ENCODE measurements at regions of chr7 and their contacts with region 1.

Region 1: DNA sequence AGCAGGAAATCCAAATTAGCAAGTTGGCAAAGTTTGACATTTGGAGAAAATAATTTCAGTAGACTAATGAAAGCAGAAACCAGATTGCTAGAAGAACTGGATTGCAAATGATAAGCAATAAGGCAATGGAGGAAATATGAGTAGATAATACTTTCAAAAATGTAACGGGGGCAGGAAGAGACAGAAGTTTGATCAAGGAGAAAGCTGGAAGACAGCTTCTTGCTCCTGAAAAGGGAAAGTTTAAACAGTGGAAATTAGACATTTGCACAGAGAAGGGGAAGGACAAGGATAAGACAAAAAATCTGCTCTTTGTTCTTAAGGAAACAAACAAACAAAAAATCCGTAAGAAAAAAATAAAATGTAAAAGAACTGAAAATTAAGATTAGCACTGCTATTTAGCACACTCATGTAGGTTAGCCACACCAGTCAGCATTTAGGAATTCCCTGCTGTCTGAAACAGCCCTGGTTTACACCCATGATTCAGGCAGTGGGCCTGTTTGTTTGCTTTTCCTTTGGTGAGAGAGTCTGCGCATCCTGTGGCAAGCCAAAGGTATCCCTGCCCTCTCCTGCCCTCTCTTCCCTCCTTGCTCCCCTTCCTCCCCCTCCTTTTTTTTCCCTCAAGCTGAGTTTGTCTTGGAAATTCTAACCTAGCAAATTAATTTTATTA is 104.3 kb upstream of the CAV2 start:
- DNase-seq: peak; percentile 85 to 90
- H3K4me3 ChIP-seq: peak overlapping the region; percentile 37; the same call in 1 of the 2 replicates
- H3K27ac ChIP-seq: peak overlapping the region; percentile 96
- H3K4me1 ChIP-seq: peaks cover 29% of the 10 kb centered on the region
- H3K27me3 ChIP-seq: no peaks in the 10 kb centered on the region
- CTCF ChIP-seq: no peak

Region 2: GRCh38 chr7:116122972-116123595 is 272.2 kb before region 1 on chr7:
- CTCF ChIA-PET with region 1: no interaction called
- POLR2A ChIA-PET with region 1: no interaction called
- intact Hi-C with region 1: no loop called
- DNase-seq: peak in 1 of 2 experiments; percentile 12
- H3K4me3 ChIP-seq: no peak overlapping the region
- H3K27ac ChIP-seq: no peak overlapping the region
- H3K4me1 ChIP-seq: no peaks in the 10 kb centered on the region
- H3K27me3 ChIP-seq: no peaks in the 10 kb centered on the region
- CTCF ChIP-seq: peak; percentile 77

Region 3: GRCh38 chr7:116249708-116250553 is 145.3 kb before region 1 on chr7:
- CTCF ChIA-PET with region 1: no interaction called
- POLR2A ChIA-PET with region 1: no interaction called
- intact Hi-C with region 1: no loop called
- DNase-seq: peak in 1 of 2 experiments; percentile 36
- H3K4me3 ChIP-seq: no peak overlapping the region
- H3K27ac ChIP-seq: no peak overlapping the region
- H3K4me1 ChIP-seq: no peaks in the 10 kb centered on the region
- H3K27me3 ChIP-seq: no peaks in the 10 kb centered on the region
- CTCF ChIP-seq: peak; percentile 50

Region 4: DNA sequence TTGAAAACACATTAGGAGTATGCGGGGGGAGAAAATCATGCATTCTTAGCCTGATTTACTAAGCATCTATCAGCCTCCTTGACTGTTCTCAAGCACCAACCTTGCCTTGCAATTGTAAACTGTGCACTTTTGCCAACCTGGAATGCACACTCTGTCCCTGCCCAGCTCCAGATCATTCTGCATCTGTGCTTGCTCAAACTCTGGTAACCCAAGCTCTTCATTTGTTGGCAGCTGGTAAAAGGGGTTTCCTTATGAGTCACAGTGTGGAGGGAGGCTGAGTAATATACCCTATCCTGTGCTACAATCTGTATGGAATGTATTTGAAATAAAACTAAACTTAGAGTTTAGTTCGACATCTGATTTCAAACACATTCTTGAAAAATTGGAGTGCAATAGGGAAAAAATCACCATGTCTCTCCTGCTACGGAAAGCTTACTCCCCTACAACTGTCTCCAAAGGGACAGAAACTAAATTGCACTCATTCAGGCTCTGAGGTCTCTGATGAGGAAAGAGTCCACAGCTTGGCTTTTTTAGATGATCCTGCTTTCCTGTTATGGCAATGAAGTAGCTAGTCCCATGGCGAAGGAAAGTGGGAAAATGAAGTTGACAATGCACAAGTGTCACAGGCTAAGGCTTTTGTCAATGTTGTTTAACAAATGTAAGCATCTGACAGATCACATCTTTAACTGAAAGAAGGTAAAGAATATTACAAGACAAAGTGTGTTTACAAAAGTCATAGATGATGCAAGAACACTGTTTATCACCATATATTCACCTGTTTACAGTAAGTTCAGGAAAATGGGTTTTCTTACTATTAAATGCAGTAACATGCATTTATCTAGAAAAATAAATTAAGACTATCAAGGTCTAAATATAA is 123.1 kb before region 1 on chr7:
- CTCF ChIA-PET with region 1: no interaction called
- POLR2A ChIA-PET with region 1: interaction called, 8 read pairs
- intact Hi-C with region 1: loop called (anchors 2 kb)
- DNase-seq: peak; percentile 80 to 95
- H3K4me3 ChIP-seq: peak overlapping the region; percentile 32; the same call in 1 of the 2 replicates
- H3K27ac ChIP-seq: peak overlapping the region; percentile 93
- H3K4me1 ChIP-seq: peaks cover 49% of the 10 kb centered on the region
- H3K27me3 ChIP-seq: no peaks in the 10 kb centered on the region
- CTCF ChIP-seq: no peak

Region 5: GRCh38 chr7:116426428-116427156 is 31.3 kb after region 1 on chr7:
- CTCF ChIA-PET with region 1: no interaction called
- POLR2A ChIA-PET with region 1: interaction called, 4 read pairs
- intact Hi-C with region 1: loop called (anchors 1 kb)
- DNase-seq: peak; percentile 56 to 91
- H3K4me3 ChIP-seq: no peak overlapping the region
- H3K27ac ChIP-seq: peak overlapping the region; percentile 59
- H3K4me1 ChIP-seq: peaks cover 26% of the 10 kb centered on the region
- H3K27me3 ChIP-seq: no peaks in the 10 kb centered on the region
- CTCF ChIP-seq: no peak

Region 6: DNA sequence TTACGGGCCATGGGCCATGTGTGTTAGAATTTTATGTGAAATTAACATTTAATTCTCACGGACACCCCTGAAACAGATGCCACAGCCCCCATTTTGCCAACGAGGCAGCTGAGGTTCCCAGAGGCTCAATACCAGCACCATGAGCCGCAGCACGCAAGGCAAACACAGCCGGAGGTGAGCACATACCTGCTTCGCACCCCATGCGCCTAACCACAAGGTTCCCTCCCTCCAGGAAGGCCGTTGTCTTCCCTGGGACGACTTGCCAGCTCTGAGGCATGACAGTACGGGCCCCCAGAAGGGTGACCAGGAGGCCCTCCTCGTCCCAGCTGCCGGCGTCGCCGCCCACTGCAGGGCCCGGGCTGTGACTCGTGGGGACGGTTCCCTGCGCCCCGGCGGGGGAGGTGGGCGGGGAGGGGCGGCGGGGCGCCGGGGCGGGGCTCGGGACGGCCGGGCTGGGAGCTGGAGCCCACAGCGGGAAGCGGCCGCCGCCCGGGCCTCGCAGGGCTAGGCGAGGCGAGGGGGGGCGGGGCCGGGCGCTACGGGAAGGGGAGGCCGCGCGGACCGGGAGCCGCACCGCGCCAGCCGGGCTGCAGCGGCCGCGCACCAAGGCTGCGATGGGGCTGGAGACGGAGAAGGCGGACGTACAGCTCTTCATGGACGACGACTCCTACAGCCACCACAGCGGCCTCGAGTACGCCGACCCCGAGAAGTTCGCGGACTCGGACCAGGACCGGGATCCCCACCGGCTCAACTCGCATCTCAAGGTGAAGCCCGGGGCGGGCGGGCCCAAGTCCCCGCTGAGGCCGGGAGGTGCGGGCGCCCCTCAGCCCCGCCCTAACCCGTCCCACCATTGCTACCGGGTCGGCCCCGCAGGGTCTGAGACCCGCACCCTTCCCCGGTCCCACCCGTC is 104.2 kb after region 1 on chr7 and contains the start of gene CAV2:
- CTCF ChIA-PET with region 1: no interaction called
- POLR2A ChIA-PET with region 1: interaction called, 6 read pairs
- intact Hi-C with region 1: loop called (anchors 2 kb)
- DNase-seq: peak; percentile 88 to 95
- H3K4me3 ChIP-seq: peak within 1 kb of the TSS; percentile 89
- H3K27ac ChIP-seq: peak within 1 kb of the TSS; percentile 81
- H3K4me1 ChIP-seq: peaks cover 35% of the 10 kb centered on the region
- H3K27me3 ChIP-seq: no peaks in the 10 kb centered on the region
- CTCF ChIP-seq: no peak
- total RNA-seq, gene CAV2: 260 and 296 TPM in 2 replicates

Region 7: DNA sequence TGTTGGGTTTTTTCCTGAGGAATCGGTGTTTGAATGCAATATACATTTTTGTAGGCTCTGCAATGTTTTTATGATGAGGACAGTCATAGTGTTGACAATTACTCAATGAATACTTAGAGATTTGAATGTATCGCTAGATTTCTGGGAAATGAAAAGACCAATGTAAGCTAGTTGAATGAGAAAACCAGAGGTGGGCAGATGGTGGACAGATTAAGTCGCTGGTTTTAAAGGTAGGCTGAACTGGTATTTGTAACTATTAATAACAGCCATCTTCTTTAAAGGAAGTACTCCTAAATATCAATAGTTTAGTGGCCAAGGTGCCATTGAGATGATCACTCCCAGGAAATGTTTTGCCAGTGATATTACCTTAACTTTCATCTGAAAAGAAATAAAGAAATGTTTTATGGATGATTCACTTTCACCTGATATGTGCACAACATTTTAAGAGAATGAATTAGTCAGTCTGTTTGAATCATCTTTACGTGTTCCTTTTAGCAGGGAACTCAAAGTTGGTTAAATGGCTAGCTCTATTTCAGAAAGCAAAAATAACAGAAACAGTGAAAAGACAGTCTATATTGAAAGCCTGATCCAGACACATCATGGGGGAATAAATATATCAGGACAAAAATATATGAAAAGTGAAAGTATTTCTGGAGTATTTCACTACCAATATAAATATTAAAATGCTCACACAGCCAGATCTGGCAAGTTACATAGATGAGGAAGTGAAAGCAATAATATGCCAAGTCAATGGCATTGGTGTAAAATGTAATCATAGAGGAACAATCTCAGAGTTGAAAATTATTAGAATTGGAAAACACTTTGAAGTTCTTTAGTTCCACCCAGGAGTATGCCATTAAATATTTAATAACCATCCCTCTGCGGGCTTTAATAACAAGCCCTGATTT is 297.4 kb after region 1 on chr7:
- CTCF ChIA-PET with region 1: no interaction called
- POLR2A ChIA-PET with region 1: no interaction called
- intact Hi-C with region 1: loop called (anchors 2 kb)
- DNase-seq: peak in 1 of 2 experiments; percentile 89
- H3K4me3 ChIP-seq: peak overlapping the region; percentile 36; the same call in 1 of the 2 replicates
- H3K27ac ChIP-seq: peak overlapping the region; percentile 89
- H3K4me1 ChIP-seq: peaks cover 46% of the 10 kb centered on the region
- H3K27me3 ChIP-seq: no peaks in the 10 kb centered on the region
- CTCF ChIP-seq: no peak

Measured in PC-9 (cell line).